HEK293 (cell line): ENCODE measurements at regions of chr1 and their contacts with region 1.

Region 1: GRCh38 chr1:157992031-157992832 is 1.2 kb upstream of the KIRREL1 start:
- H3K4me3 ChIP-seq: no peak overlapping the region
- H3K27ac ChIP-seq: no peak overlapping the region
- H3K4me1 ChIP-seq: peaks cover 3% of the 10 kb centered on the region; the same call in 1 of the 2 replicates
- CTCF ChIP-seq: peak; percentile 82

Region 2: DNA sequence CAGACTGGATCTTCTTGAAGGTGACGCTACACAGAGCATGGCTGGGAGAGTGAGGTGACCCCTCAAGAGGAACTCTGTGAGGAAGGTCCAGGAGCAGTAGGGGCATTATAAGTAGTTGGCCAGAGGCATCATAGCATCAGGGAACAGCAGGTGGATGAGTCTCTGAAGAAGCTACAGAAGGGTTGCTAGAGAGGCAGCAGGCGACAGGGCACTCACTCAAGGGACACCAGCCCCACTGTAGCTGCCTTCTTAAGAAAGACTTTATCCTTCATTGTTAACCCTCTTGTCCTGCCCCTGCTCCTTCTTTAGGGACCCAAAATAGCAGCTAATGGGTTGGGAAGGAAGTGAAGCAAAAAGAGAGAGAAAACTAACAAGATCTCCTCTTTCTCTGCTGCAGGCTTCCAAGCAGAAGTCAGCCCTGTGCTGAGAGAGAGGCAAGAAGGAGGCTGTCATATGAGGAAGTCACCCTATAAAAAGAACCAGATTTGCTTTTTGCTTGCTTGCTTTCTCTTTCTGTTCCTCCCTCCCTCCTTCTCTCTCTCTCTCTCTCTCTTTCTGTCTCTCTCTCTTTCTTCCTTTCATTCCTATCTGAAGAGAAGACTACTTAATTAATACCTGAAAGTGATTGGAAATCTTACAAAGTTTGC is 142.9 kb before region 1 on chr1:
- CTCF ChIA-PET with region 1: no interaction called
- POLR2A ChIA-PET with region 1: no interaction called
- H3K4me3 ChIP-seq: no peak overlapping the region
- H3K27ac ChIP-seq: no peak overlapping the region
- H3K4me1 ChIP-seq: no peaks in the 10 kb centered on the region
- CTCF ChIP-seq: no peak

Region 3: GRCh38 chr1:157958263-157958662 is 34.0 kb before region 1 on chr1:
- CTCF ChIA-PET with region 1: interaction called, 37 read pairs
- POLR2A ChIA-PET with region 1: no interaction called
- H3K4me3 ChIP-seq: no peak overlapping the region
- H3K27ac ChIP-seq: no peak overlapping the region
- H3K4me1 ChIP-seq: no peaks in the 10 kb centered on the region
- CTCF ChIP-seq: no peak

Region 4: GRCh38 chr1:158007667-158008386 is 15.6 kb after region 1 on chr1:
- CTCF ChIA-PET with region 1: interaction called, 33 read pairs
- POLR2A ChIA-PET with region 1: interaction called, 5 read pairs
- H3K4me3 ChIP-seq: no peak overlapping the region
- H3K27ac ChIP-seq: no peak overlapping the region
- H3K4me1 ChIP-seq: peaks cover 19% of the 10 kb centered on the region
- CTCF ChIP-seq: no peak

Region 5: GRCh38 chr1:158028969-158029368 is 36.7 kb after region 1 on chr1:
- CTCF ChIA-PET with region 1: interaction called, 55 read pairs
- POLR2A ChIA-PET with region 1: no interaction called
- H3K4me3 ChIP-seq: no peak overlapping the region
- H3K27ac ChIP-seq: no peak overlapping the region
- H3K4me1 ChIP-seq: no peaks in the 10 kb centered on the region
- CTCF ChIP-seq: no peak

Region 6: GRCh38 chr1:158067662-158068061 is 75.4 kb after region 1 on chr1:
- CTCF ChIA-PET with region 1: interaction called, 10 read pairs
- POLR2A ChIA-PET with region 1: no interaction called
- H3K4me3 ChIP-seq: no peak overlapping the region
- H3K27ac ChIP-seq: no peak overlapping the region
- H3K4me1 ChIP-seq: no peaks in the 10 kb centered on the region
- CTCF ChIP-seq: no peak

Region 7: DNA sequence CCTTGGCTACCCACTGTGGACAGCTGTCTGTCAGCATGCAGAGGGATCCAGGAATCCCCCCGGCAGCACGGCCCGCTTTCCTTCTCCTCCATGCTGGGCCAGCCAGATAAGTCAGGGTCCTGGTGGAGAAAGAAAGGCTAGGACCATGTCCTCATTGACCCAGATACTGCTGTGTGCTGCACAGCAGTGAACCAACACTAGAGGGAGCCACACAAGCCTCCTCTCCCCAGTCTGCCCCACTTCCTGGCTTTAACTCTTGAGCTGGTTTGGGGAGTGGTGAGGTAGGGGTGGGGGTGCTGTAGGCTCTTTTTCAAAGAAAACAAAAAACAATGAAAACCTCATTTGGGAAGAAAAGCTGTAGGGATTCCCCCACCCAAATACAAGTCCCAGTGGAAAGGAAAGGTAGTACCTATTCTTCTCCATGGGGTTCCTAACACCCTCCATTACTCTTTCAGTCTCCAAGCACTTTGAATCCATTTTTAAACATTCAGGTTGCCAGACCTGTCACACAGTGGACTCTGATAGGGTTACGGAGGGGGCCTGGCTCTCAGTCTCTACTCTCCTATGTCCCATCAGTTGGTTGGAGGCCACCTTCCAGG is 103.6 kb after region 1 on chr1:
- CTCF ChIA-PET with region 1: interaction called, 77 read pairs
- POLR2A ChIA-PET with region 1: no interaction called
- H3K4me3 ChIP-seq: no peak overlapping the region
- H3K27ac ChIP-seq: no peak overlapping the region
- H3K4me1 ChIP-seq: no peaks in the 10 kb centered on the region
- CTCF ChIP-seq: peak; percentile 38; the same call in 1 of the 2 replicates